Naive thymus-derived CD4-positive, alpha-beta T cell (primary cell): ENCODE measurements at regions of chr1 and their contacts with region 1.

Region 1: GRCh38 chr1:30379684-30380624 is 343.4 kb downstream of the MATN1 start:
- DNase-seq: peak in 8 of 9 donors; percentile 28 to 66 (median 52)
- ATAC-seq: peak; percentile 71
- H3K4me3 ChIP-seq: no peak overlapping the region
- H3K4me3 Mint-ChIP-seq: peak overlapping the region in 1 of 10 donors; percentile 23
- H3K27ac ChIP-seq: no peak overlapping the region
- H3K27ac Mint-ChIP-seq: no peak overlapping the region
- H3K4me1 ChIP-seq: no peaks in the 10 kb centered on the region
- H3K4me1 Mint-ChIP-seq: peaks cover 0 to 9% (median 4%) of the 10 kb centered on the region in 7 donors
- H3K27me3 ChIP-seq: no peaks in the 10 kb centered on the region
- H3K27me3 Mint-ChIP-seq: peaks cover 0 to 23% (median 12%) of the 10 kb centered on the region in 5 donors

Region 2: GRCh38 chr1:30707412-30708360 is 327.7 kb after region 1 on chr1:
- CTCF ChIA-PET with region 1: interaction called, 4 read pairs
- POLR2A ChIA-PET with region 1: no interaction called
- intact Hi-C with region 1: loop called in 1 of 2 experiments (anchors 10 kb)
- DNase-seq: peak in 7 of 9 donors; percentile 45 to 68 (median 54)
- ATAC-seq: peak; percentile 82
- H3K4me3 ChIP-seq: no peak overlapping the region
- H3K4me3 Mint-ChIP-seq: no peak overlapping the region
- H3K27ac ChIP-seq: no peak overlapping the region
- H3K27ac Mint-ChIP-seq: peak overlapping the region in 1 of 9 donors; percentile 55
- H3K4me1 ChIP-seq: no peaks in the 10 kb centered on the region
- H3K4me1 Mint-ChIP-seq: peaks cover 0 to 3% (median 0%) of the 10 kb centered on the region in 7 donors
- H3K27me3 ChIP-seq: no peaks in the 10 kb centered on the region
- H3K27me3 Mint-ChIP-seq: peaks cover 0 to 28% (median 6%) of the 10 kb centered on the region in 5 donors